Activated T-helper 2 cell treated with anti-CD3 and anti-CD28 coated beads, Interferon-gamma antibody, Interleukin-2, Interleukin-4, amounts not matched to agents 10 μg/mL and 5 μg/mL and 100 μg/mL, durations not matched to agents 14 hours and 24 hours and 36 hours (primary cell): ENCODE measurements at regions of chr11 and their contacts with region 1.

Region 1: GRCh38 chr11:117232092-117232878 is at the start of gene RNF214:
- DNase-seq: peak; percentile 68
- H3K4me3 Mint-ChIP-seq: peak within 1 kb of the TSS; percentile 98
- H3K27ac Mint-ChIP-seq: peak within 1 kb of the TSS; percentile 100
- H3K4me1 Mint-ChIP-seq: peaks cover 31% of the 10 kb centered on the region
- H3K27me3 Mint-ChIP-seq: no peaks in the 10 kb centered on the region
- total RNA-seq, gene RNF214: 22.7 and 25.8 TPM in 2 replicates

Region 2: DNA sequence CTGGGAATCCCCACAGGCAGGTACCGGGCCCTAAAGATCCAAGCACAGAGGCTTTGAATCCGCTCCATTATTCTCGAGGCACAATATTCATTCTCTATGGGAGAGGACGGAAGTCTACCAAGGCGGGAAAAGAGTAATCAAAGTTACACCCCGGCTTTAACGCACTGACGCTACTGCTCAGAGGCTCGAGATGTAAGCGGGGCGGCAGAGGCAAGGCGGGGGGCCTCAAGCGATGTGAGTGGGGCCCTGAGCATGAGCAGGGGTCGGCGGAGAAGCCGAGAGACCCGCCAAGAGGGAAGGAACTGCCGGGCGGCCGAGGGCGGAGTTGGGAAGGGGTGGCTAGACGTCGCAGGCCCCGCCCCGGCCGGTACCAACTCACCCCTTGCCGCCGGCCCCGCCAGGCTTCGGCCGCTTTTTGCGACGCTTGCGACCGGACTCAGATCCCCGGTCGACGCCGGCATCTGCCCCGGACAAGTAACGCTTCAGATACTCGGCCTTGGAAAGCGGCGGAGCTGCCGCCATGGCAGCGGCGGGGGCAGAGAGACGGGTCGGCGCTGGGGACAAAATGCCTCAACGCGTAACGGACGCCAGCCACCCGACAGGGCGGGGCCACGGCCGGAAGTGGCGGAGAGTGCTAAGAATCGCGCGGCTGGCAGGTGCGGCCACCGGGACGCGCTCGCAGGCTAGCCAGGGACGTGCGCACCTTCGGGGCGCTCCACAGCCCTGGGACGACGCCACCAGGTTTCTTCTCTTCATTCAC is 459.7 kb before region 1 on chr11 and contains the start of gene BUD13:
- intact Hi-C with region 1: loop called (anchors 2 kb)
- DNase-seq: peak; percentile 93
- H3K4me3 Mint-ChIP-seq: peak within 1 kb of the TSS; percentile 99
- H3K27ac Mint-ChIP-seq: peak within 1 kb of the TSS; percentile 97
- H3K4me1 Mint-ChIP-seq: peaks cover 39% of the 10 kb centered on the region
- H3K27me3 Mint-ChIP-seq: no peaks in the 10 kb centered on the region
- total RNA-seq, gene BUD13: 30.4 and 34.3 TPM in 2 replicates

Region 3: GRCh38 chr11:116993599-116993998 is 238.7 kb before region 1 on chr11:
- intact Hi-C with region 1: no loop called
- DNase-seq: no peak
- H3K4me3 Mint-ChIP-seq: no peak overlapping the region
- H3K27ac Mint-ChIP-seq: peak overlapping the region; percentile 9
- H3K4me1 Mint-ChIP-seq: peaks cover 41% of the 10 kb centered on the region
- H3K27me3 Mint-ChIP-seq: no peaks in the 10 kb centered on the region

Region 4: GRCh38 chr11:117178210-117179034 is 53.9 kb before region 1 on chr11 and contains the start of gene SIDT2:
- intact Hi-C with region 1: loop called (anchors 1 kb)
- DNase-seq: peak; percentile 86
- H3K4me3 Mint-ChIP-seq: peak within 1 kb of the TSS; percentile 94
- H3K27ac Mint-ChIP-seq: peak within 1 kb of the TSS; percentile 86
- H3K4me1 Mint-ChIP-seq: peaks cover 27% of the 10 kb centered on the region
- H3K27me3 Mint-ChIP-seq: no peaks in the 10 kb centered on the region
- total RNA-seq, gene SIDT2: 26.1 and 27.1 TPM in 2 replicates

Region 5: GRCh38 chr11:117327567-117328374 is 95.5 kb after region 1 on chr11 and contains the start of gene CEP164:
- intact Hi-C with region 1: loop called (anchors 2 kb)
- DNase-seq: peak; percentile 95
- H3K4me3 Mint-ChIP-seq: peak within 1 kb of the TSS; percentile 60
- H3K27ac Mint-ChIP-seq: peak within 1 kb of the TSS; percentile 56
- H3K4me1 Mint-ChIP-seq: peaks cover 8% of the 10 kb centered on the region
- H3K27me3 Mint-ChIP-seq: peaks cover 4% of the 10 kb centered on the region
- total RNA-seq, gene CEP164: 32.3 and 34.2 TPM in 2 replicates